Left lung (tissue), 14 donors: ENCODE measurements at regions of chr7 and their contacts with region 1.

Region 1: GRCh38 chr7:29105752-29106668 is 40.3 kb downstream of the CPVL start:
- DNase-seq: peak in 2 of 4 donors; percentile 73 to 86
- ATAC-seq: peak; percentile 92
- H3K4me3 ChIP-seq: no peak overlapping the region
- H3K27ac ChIP-seq: no peak overlapping the region
- H3K4me1 ChIP-seq: peaks cover 6 to 24% of the 10 kb centered on the region in 2 donors
- H3K27me3 ChIP-seq: no peaks in the 10 kb centered on the region
- CTCF ChIP-seq: peak; percentile 65 to 82

Region 2: GRCh38 chr7:28926871-28927597 is 179.0 kb before region 1 on chr7:
- intact Hi-C with region 1: loop called (anchors 5 to 10 kb)
- DNase-seq: peak; percentile 70 to 93 (median 84)
- ATAC-seq: peak; percentile 96
- H3K4me3 ChIP-seq: peak overlapping the region; percentile 29 to 42
- H3K27ac ChIP-seq: no peak overlapping the region
- H3K4me1 ChIP-seq: peaks cover 0 to 22% of the 10 kb centered on the region in 2 donors
- H3K27me3 ChIP-seq: peaks cover 0 to 10% of the 10 kb centered on the region in 2 donors
- CTCF ChIP-seq: peak; percentile 73 to 87

Region 3: GRCh38 chr7:28955718-28956619 is 150.0 kb before region 1 on chr7:
- intact Hi-C with region 1: loop called in 1 of 2 experiments (anchors 10 kb)
- DNase-seq: peak; percentile 71 to 91 (median 82)
- ATAC-seq: peak; percentile 77
- H3K4me3 ChIP-seq: peak overlapping the region; percentile 40 to 43
- H3K27ac ChIP-seq: no peak overlapping the region
- H3K4me1 ChIP-seq: peaks cover 32 to 41% of the 10 kb centered on the region in 2 donors
- H3K27me3 ChIP-seq: peaks cover 17 to 66% of the 10 kb centered on the region in 2 donors
- CTCF ChIP-seq: peak; percentile 40 to 58